Endothelial cell of umbilical vein (primary cell): ENCODE measurements at regions of chr1 and their contacts with region 1.

Region 1: GRCh38 chr1:39609618-39610331 is 29.7 kb downstream of the HEYL start:
- DNase-seq: peak; percentile 30
- H3K4me3 ChIP-seq: no peak overlapping the region
- H3K27ac ChIP-seq: no peak overlapping the region
- H3K4me1 ChIP-seq: no peaks in the 10 kb centered on the region
- H3K27me3 ChIP-seq: peaks cover 0 to 5% of the 10 kb centered on the region in 2 experiments
- CTCF ChIP-seq: peak; percentile 88 to 93
- POLR2A ChIP-seq: no peak

Region 2: GRCh38 chr1:39529901-39530535 is 79.8 kb before region 1 on chr1:
- CTCF ChIA-PET with region 1: no interaction called
- POLR2A ChIA-PET with region 1: no interaction called
- dilution Hi-C with region 1: no loop called
- intact Hi-C with region 1: no loop called
- DNase-seq: no peak
- H3K4me3 ChIP-seq: no peak overlapping the region
- H3K27ac ChIP-seq: no peak overlapping the region
- H3K4me1 ChIP-seq: no peaks in the 10 kb centered on the region
- H3K27me3 ChIP-seq: no peaks in the 10 kb centered on the region
- CTCF ChIP-seq: no peak
- POLR2A ChIP-seq: no peak

Region 3: GRCh38 chr1:39545531-39545930 is 64.2 kb before region 1 on chr1:
- CTCF ChIA-PET with region 1: no interaction called
- POLR2A ChIA-PET with region 1: no interaction called
- dilution Hi-C with region 1: no loop called
- intact Hi-C with region 1: no loop called
- DNase-seq: no peak
- H3K4me3 ChIP-seq: no peak overlapping the region
- H3K27ac ChIP-seq: no peak overlapping the region
- H3K4me1 ChIP-seq: no peaks in the 10 kb centered on the region
- H3K27me3 ChIP-seq: no peaks in the 10 kb centered on the region
- CTCF ChIP-seq: no peak
- POLR2A ChIP-seq: no peak

Region 4: GRCh38 chr1:39625462-39626273 is 15.9 kb after region 1 on chr1:
- CTCF ChIA-PET with region 1: interaction called, 56 read pairs
- POLR2A ChIA-PET with region 1: no interaction called
- dilution Hi-C with region 1: no loop called
- intact Hi-C with region 1: no loop called
- DNase-seq: no peak
- H3K4me3 ChIP-seq: no peak overlapping the region
- H3K27ac ChIP-seq: no peak overlapping the region
- H3K4me1 ChIP-seq: no peaks in the 10 kb centered on the region
- H3K27me3 ChIP-seq: peaks cover 13 to 21% of the 10 kb centered on the region in 2 experiments
- CTCF ChIP-seq: no peak
- POLR2A ChIP-seq: no peak

Region 5: GRCh38 chr1:39646232-39647081 is 36.7 kb after region 1 on chr1:
- CTCF ChIA-PET with region 1: interaction called, 440 read pairs
- POLR2A ChIA-PET with region 1: no interaction called
- dilution Hi-C with region 1: no loop called
- intact Hi-C with region 1: no loop called
- DNase-seq: no peak
- H3K4me3 ChIP-seq: no peak overlapping the region
- H3K27ac ChIP-seq: no peak overlapping the region
- H3K4me1 ChIP-seq: no peaks in the 10 kb centered on the region
- H3K27me3 ChIP-seq: peaks cover 14 to 24% of the 10 kb centered on the region in 2 experiments
- CTCF ChIP-seq: no peak
- POLR2A ChIP-seq: no peak

Region 6: GRCh38 chr1:39672551-39672947 is 62.8 kb after region 1 on chr1:
- CTCF ChIA-PET with region 1: interaction called, 55 read pairs
- POLR2A ChIA-PET with region 1: no interaction called
- dilution Hi-C with region 1: no loop called
- intact Hi-C with region 1: no loop called
- DNase-seq: peak; percentile 13
- H3K4me3 ChIP-seq: no peak overlapping the region
- H3K27ac ChIP-seq: no peak overlapping the region
- H3K4me1 ChIP-seq: no peaks in the 10 kb centered on the region
- H3K27me3 ChIP-seq: peaks cover 42 to 49% of the 10 kb centered on the region in 2 experiments
- CTCF ChIP-seq: peak; percentile 39 to 66
- POLR2A ChIP-seq: no peak

Region 7: GRCh38 chr1:39720094-39720999 is 110.6 kb after region 1 on chr1:
- CTCF ChIA-PET with region 1: interaction called, 64 read pairs
- POLR2A ChIA-PET with region 1: no interaction called
- dilution Hi-C with region 1: no loop called
- intact Hi-C with region 1: loop called (anchors 1 kb)
- DNase-seq: peak; percentile 68
- H3K4me3 ChIP-seq: no peak overlapping the region
- H3K27ac ChIP-seq: no peak overlapping the region
- H3K4me1 ChIP-seq: no peaks in the 10 kb centered on the region
- H3K27me3 ChIP-seq: peaks cover 25 to 55% of the 10 kb centered on the region in 2 experiments
- CTCF ChIP-seq: peak in 1 of 2 donors; percentile 33
- POLR2A ChIP-seq: no peak

Region 8: GRCh38 chr1:39799770-39800470 is 190.1 kb after region 1 on chr1:
- CTCF ChIA-PET with region 1: interaction called, 31 read pairs
- POLR2A ChIA-PET with region 1: no interaction called
- dilution Hi-C with region 1: no loop called
- intact Hi-C with region 1: loop called (anchors 1 kb)
- DNase-seq: peak; percentile 35
- H3K4me3 ChIP-seq: no peak overlapping the region
- H3K27ac ChIP-seq: no peak overlapping the region
- H3K4me1 ChIP-seq: no peaks in the 10 kb centered on the region
- H3K27me3 ChIP-seq: peaks cover 0 to 3% of the 10 kb centered on the region in 2 experiments
- CTCF ChIP-seq: peak; percentile 75 to 85
- POLR2A ChIP-seq: no peak

Region 9: GRCh38 chr1:40305457-40305856 is 695.7 kb after region 1 on chr1:
- CTCF ChIA-PET with region 1: no interaction called
- POLR2A ChIA-PET with region 1: no interaction called
- dilution Hi-C with region 1: no loop called
- intact Hi-C with region 1: no loop called
- DNase-seq: no peak
- H3K4me3 ChIP-seq: no peak overlapping the region
- H3K27ac ChIP-seq: no peak overlapping the region
- H3K4me1 ChIP-seq: no peaks in the 10 kb centered on the region
- H3K27me3 ChIP-seq: peaks cover 0 to 2% of the 10 kb centered on the region in 2 experiments
- CTCF ChIP-seq: no peak
- POLR2A ChIP-seq: no peak